ENCODE measurements at regions of chr16 and their contacts with region 1.

Region 1: GRCh38 chr16:81314603-81315270 is at the start of gene GAN:
- DNase-seq: peak; percentile 96
- H3K4me3 ChIP-seq: peak within 1 kb of the TSS; percentile 81 to 96 (median 86)
- H3K27ac ChIP-seq: peak within 1 kb of the TSS; percentile 95 to 97 (median 96)
- H3K4me1 ChIP-seq: peaks cover 14 to 49% (median 30%) of the 10 kb centered on the region in 4 donors
- H3K27me3 ChIP-seq: no peaks in the 10 kb centered on the region
- CTCF ChIP-seq: no peak
- EP300 ChIP-seq: no peak
- POLR2A ChIP-seq: peak; percentile 95
- total RNA-seq, gene GAN: 12.9 to 378 (median 14.7) TPM

Region 2: GRCh38 chr16:81006814-81007696 is 307.7 kb before region 1 on chr16 and contains the starts of genes CENPN and CMC2:
- in situ Hi-C with region 1: loop called in 1 of 4 experiments (anchors 25 kb)
- intact Hi-C with region 1: no loop called
- DNase-seq: peak; percentile 99
- H3K4me3 ChIP-seq: peak within 1 kb of the TSS; percentile 76 to 95 (median 86)
- H3K27ac ChIP-seq: peak within 1 kb of the TSS; percentile 96 to 100 (median 98)
- H3K4me1 ChIP-seq: peaks cover 4 to 29% (median 21%) of the 10 kb centered on the region in 4 donors
- H3K27me3 ChIP-seq: no peaks in the 10 kb centered on the region
- CTCF ChIP-seq: peak in 2 of 5 experiments; percentile 12 to 42
- EP300 ChIP-seq: no peak
- POLR2A ChIP-seq: peak; percentile 91
- total RNA-seq, gene CENPN: 4.9 to 12.7 (median 8.5) TPM
- total RNA-seq, gene CMC2: 2.8 to 42.9 (median 29.8) TPM

Region 3: GRCh38 chr16:81243942-81244341 is 70.8 kb before region 1 on chr16:
- in situ Hi-C with region 1: loop called in 1 of 4 experiments (anchors 10 kb)
- intact Hi-C with region 1: no loop called
- DNase-seq: no peak
- H3K4me3 ChIP-seq: no peak overlapping the region
- H3K27ac ChIP-seq: no peak overlapping the region
- H3K4me1 ChIP-seq: peaks cover 0 to 9% (median 3%) of the 10 kb centered on the region in 4 donors
- H3K27me3 ChIP-seq: no peaks in the 10 kb centered on the region
- CTCF ChIP-seq: no peak
- EP300 ChIP-seq: no peak
- POLR2A ChIP-seq: no peak

Region 4: GRCh38 chr16:81261049-81261648 is 53.6 kb before region 1 on chr16:
- in situ Hi-C with region 1: loop called in 1 of 4 experiments (anchors 10 kb)
- intact Hi-C with region 1: no loop called
- DNase-seq: no peak
- H3K4me3 ChIP-seq: no peak overlapping the region
- H3K27ac ChIP-seq: no peak overlapping the region
- H3K4me1 ChIP-seq: peaks cover 5 to 15% (median 8%) of the 10 kb centered on the region in 4 donors
- H3K27me3 ChIP-seq: no peaks in the 10 kb centered on the region
- CTCF ChIP-seq: peak; percentile 63 to 79 (median 72)
- EP300 ChIP-seq: no peak
- POLR2A ChIP-seq: no peak

Region 5: DNA sequence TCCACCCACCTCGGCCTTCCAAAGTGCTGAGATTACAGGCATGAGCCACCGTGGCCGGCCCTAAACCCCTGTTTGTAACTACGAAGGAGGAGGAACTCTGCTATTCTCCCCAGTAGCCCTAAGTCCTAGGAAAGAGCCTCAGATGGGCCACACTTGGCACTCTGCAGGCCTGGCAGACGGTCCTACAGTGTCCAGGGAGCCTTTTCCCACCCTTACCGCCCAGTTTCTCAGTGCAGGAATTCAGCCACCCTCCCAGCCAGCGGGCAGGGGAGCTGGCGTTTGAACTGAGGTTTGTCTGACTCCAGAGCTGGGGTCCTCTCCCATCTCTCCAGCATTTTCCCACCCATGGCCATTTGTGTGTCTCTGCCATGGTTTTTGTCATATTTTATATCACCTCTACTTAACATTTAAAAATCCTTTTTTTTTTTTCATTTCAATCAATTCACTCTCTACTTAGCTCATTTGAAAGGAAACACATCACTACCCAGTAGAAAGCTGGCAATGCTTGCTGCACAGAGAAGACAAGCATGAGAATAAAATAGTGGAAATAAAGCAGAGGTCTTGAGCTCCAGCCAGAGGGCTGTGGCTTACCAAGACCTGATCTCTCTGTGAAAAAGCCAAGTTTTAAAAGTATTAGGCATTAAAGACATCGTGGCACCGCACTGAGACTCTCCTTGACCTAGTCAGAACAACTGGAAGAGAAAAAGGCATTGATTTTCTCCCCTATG is 41.4 kb before region 1 on chr16:
- in situ Hi-C with region 1: loop called in 1 of 4 experiments (anchors 10 kb)
- intact Hi-C with region 1: loop called (anchors 5 kb)
- DNase-seq: no peak
- H3K4me3 ChIP-seq: no peak overlapping the region
- H3K27ac ChIP-seq: peak overlapping the region; percentile 87 to 91 (median 88)
- H3K4me1 ChIP-seq: peaks cover 5 to 57% (median 33%) of the 10 kb centered on the region in 4 donors
- H3K27me3 ChIP-seq: no peaks in the 10 kb centered on the region
- CTCF ChIP-seq: no peak
- EP300 ChIP-seq: no peak
- POLR2A ChIP-seq: no peak

Measured in transverse colon (tissue), 4 donors.